ENCODE measurements at regions of chr20 and their contacts with region 1.

Region 1: GRCh38 chr20:44475694-44476560 is at the start of gene TTPAL:
- DNase-seq: peak; percentile 95 to 99
- H3K4me3 ChIP-seq: peak within 1 kb of the TSS; percentile 89
- H3K4me3 Mint-ChIP-seq: peak within 1 kb of the TSS; percentile 98
- H3K27ac Mint-ChIP-seq: peak within 1 kb of the TSS; percentile 96
- H3K4me1 ChIP-seq: peaks cover 19% of the 10 kb centered on the region
- H3K4me1 Mint-ChIP-seq: peaks cover 25% of the 10 kb centered on the region
- H3K27me3 ChIP-seq: no peaks in the 10 kb centered on the region
- H3K27me3 Mint-ChIP-seq: no peaks in the 10 kb centered on the region
- CTCF ChIP-seq: peak; percentile 28 to 78
- total RNA-seq, gene TTPAL: 53.9 and 54.6 TPM in 2 replicates

Region 2: DNA sequence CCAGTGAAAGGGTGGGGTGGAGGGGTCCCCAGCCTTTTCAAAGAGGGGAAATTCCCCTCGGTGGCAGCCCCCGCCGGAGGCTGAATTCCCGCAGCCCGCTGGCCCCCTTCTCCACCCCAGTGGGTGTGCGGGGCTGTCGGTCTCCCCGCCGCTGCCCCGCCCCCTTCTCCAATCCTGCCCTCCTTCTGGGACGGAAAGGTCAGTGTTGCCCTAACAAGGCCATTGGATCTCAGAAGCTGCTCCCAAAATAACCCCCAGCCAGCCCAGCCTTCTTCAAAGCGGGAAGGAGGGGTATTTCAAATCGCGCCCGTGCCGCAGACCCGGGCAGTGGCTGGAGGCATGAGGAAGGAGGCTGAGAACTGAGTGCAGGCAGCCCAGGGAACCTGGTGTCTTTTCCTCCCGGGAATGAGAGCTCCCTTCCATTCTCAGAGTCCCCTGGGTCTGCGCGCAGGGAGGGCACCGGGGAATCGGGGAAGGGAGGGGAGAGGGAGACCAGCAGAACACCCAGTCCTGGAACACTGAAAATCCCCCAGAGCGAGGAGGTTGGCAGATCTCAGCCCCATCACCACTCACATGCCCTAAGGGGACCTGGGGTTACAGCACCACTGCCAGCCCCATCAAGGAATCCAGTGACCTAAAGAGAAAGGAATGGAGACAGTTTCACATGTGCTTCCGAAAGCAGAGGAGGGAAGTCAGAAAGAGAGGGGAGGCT is 288.7 kb before region 1 on chr20 and contains the start of gene JPH2:
- CTCF ChIA-PET with region 1: interaction called, 13 read pairs
- POLR2A ChIA-PET with region 1: interaction called, 3 read pairs
- intact Hi-C with region 1: no loop called
- DNase-seq: peak; percentile 82 to 87
- H3K4me3 ChIP-seq: peak within 1 kb of the TSS; percentile 38
- H3K4me3 Mint-ChIP-seq: peak within 1 kb of the TSS; percentile 74
- H3K27ac Mint-ChIP-seq: peak within 1 kb of the TSS; percentile 13
- H3K4me1 ChIP-seq: peaks cover 45% of the 10 kb centered on the region
- H3K4me1 Mint-ChIP-seq: peaks cover 27% of the 10 kb centered on the region
- H3K27me3 ChIP-seq: no peaks in the 10 kb centered on the region
- H3K27me3 Mint-ChIP-seq: no peaks in the 10 kb centered on the region
- CTCF ChIP-seq: no peak
- total RNA-seq, gene JPH2: 10.5 and 11.1 TPM in 2 replicates

Region 3: GRCh38 chr20:44388466-44389023 is 87.4 kb before region 1 on chr20:
- CTCF ChIA-PET with region 1: interaction called, 25 read pairs
- POLR2A ChIA-PET with region 1: no interaction called
- intact Hi-C with region 1: loop called (anchors 1 kb)
- DNase-seq: peak in 1 of 2 experiments; percentile 75
- H3K4me3 ChIP-seq: no peak overlapping the region
- H3K4me3 Mint-ChIP-seq: no peak overlapping the region
- H3K27ac Mint-ChIP-seq: peak overlapping the region; percentile 18
- H3K4me1 ChIP-seq: peaks cover 60% of the 10 kb centered on the region
- H3K4me1 Mint-ChIP-seq: peaks cover 53% of the 10 kb centered on the region
- H3K27me3 ChIP-seq: no peaks in the 10 kb centered on the region
- H3K27me3 Mint-ChIP-seq: no peaks in the 10 kb centered on the region
- CTCF ChIP-seq: peak; percentile 73 to 78

Region 4: DNA sequence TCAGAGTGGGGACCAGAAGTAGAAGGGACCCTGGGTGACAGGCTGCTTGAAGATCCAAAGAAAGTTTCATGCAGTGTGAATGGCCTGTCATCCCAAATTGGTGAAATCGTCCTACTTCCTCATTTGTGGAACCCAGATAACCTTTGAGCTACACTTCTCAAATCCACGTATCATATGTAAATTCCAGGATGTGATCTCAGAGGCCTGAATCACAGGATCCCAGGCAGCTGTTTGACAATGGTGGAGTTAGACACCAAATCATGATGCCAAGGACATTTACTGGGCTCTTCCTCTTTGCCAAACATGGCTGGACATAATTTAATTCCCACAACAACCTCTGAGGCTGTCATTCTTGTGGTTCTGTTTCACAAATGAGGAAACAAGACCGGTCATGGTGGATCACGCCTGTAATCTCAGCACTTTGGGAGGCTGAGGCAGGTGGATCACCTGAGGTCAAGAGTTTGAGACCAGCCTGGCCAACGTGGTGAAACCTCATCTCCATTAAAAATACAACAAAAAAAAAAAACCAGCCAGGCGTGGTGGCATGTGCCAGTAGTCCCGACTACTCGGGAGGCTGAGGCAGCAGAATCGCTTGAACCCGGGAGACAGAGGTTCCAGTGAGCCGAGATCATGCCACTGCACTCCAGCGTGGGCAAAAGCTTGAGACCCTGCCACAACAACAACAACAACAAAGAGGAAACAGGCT is 40.1 kb before region 1 on chr20:
- CTCF ChIA-PET with region 1: interaction called, 10 read pairs
- POLR2A ChIA-PET with region 1: interaction called, 4 read pairs
- intact Hi-C with region 1: no loop called
- DNase-seq: no peak
- H3K4me3 ChIP-seq: no peak overlapping the region
- H3K4me3 Mint-ChIP-seq: no peak overlapping the region
- H3K27ac Mint-ChIP-seq: peak overlapping the region; percentile 23
- H3K4me1 ChIP-seq: peaks cover 19% of the 10 kb centered on the region
- H3K4me1 Mint-ChIP-seq: peaks cover 7% of the 10 kb centered on the region
- H3K27me3 ChIP-seq: no peaks in the 10 kb centered on the region
- H3K27me3 Mint-ChIP-seq: no peaks in the 10 kb centered on the region
- CTCF ChIP-seq: no peak

Region 5: GRCh38 chr20:44521484-44522481 is 45.9 kb after region 1 on chr20 and contains the start of gene SERINC3:
- CTCF ChIA-PET with region 1: interaction called, 11 read pairs
- POLR2A ChIA-PET with region 1: interaction called, 11 read pairs
- intact Hi-C with region 1: loop called (anchors 2 kb)
- DNase-seq: peak; percentile 98 to 100
- H3K4me3 ChIP-seq: peak within 1 kb of the TSS; percentile 77
- H3K4me3 Mint-ChIP-seq: peak within 1 kb of the TSS; percentile 68
- H3K27ac Mint-ChIP-seq: peak within 1 kb of the TSS; percentile 72
- H3K4me1 ChIP-seq: peaks cover 68% of the 10 kb centered on the region
- H3K4me1 Mint-ChIP-seq: peaks cover 68% of the 10 kb centered on the region
- H3K27me3 ChIP-seq: no peaks in the 10 kb centered on the region
- H3K27me3 Mint-ChIP-seq: no peaks in the 10 kb centered on the region
- CTCF ChIP-seq: peak in 1 of 2 experiments; percentile 22
- total RNA-seq, gene SERINC3: 179 and 185 TPM in 2 replicates

Measured in Caco-2 (cell line).